Posterior cingulate gyrus (tissue), 11 donors: ENCODE measurements at regions of chr11 and their contacts with region 1.

Region 1: DNA sequence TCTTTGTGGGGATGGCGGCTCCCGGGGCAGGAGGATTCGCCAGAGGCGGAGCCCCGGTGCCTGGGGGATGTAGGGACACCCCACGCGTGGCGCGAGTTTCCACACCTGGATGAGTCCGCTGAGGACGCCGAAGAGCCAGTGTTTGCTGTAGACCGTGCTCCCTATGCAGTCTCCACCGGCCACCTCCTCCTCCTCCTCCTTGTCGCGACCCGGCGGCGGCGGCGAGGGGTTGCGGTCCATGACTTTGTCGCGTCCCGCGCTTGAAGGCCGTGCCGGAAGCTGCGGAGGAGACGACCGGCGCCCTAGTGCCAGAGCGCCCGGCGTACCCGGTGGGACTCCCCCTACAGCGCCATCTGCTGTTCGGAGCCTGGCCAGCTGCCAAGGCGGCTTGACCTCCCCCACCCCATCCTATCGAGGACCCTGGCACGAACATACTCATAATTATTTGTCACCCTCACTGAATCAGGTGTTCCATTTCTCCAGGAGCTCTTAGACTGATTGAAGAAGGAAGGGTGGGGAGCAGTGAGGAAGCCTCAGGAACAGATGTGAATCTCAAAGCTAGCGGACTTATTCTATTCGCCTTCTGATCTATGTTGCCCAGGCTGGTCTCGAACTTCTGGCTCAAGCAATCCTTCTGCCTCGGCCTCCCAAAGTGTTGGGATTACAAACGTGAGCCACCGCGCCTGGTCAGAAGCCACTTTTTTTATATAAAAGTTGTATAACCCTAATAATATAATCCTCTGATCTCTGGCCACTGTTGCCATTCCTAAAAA is at the start of gene SAAL1:
- DNase-seq: peak; percentile 77 to 98 (median 88)

Region 2: DNA sequence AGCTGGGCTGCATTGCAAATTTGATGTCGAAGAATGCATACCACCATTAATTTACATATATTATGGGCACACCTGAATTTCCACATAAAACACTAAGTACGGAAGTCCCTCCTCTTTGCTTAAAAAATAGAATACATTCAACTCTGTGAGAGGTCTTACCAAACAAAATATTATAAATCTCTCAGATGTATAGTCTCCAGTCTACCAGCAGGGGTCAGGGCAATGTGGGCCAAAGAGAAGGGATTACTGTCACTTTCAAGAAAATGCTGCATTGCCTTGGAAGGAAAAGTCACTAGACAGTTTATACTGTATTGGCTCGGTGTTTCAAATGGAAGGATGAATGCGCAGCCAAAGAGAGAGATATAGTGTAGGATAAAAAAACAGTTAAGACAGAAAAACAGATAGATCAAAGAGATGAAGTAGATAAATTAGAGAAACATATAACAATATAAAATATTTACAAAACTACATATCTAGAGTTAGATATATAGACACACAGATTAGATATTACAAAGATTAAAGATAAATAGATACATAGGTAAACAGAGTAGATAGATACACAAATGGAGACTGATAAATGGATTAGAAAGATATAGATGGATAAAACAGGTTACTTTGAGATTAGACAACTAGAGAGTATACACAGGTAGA is 114.1 kb before region 1 on chr11:
- intact Hi-C with region 1: loop called (anchors 2 kb)
- DNase-seq: peak in 5 of 10 donors; percentile 36 to 85 (median 39)

Region 3: DNA sequence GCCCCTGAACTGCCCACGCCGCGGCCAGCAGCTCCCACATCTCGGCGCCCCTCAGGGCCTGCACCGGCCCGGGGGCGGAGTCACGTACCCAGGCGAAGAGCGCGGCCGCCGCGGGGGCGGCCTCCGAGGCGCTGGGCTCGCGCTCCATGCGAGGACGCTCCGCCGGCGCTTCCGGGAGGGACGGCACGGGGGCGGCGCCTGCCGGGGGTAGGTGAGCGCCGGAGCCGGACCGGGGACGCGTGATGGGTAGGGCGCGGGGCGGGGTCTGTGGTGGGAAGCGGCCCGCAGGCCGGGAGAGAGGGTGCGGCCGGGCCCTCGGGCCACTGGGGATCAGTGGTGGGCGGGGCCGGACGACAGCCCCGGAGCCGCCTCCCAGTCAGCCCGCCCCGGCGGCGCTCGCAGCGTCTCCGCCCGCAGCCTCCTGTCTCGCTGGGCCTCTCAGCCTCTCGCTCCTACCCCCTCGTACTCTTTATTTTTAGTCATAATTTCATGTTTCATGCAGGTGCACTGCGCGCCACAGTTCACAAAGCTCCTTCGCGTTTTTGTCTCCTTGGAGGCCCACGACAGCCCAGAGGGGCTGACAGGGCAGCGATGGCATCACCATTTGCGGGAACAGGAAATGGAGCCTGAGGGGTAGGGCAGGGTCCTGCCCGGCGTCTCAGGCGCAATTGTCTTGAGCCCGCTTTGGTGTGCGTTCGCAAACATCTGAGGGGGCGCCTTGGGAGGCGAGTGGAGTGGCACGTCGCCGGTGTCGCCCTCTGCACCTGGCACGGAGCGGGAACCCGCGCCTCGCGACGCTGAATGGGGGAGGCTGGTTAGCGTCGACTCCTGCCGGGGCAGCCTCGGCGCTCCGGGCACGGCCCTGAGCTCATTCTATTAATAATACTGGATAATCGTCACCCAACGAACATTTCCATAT is 92.9 kb before region 1 on chr11 and contains the start of gene SERGEF:
- intact Hi-C with region 1: loop called (anchors 5 kb)
- DNase-seq: peak; percentile 70 to 98 (median 86)

Region 4: DNA sequence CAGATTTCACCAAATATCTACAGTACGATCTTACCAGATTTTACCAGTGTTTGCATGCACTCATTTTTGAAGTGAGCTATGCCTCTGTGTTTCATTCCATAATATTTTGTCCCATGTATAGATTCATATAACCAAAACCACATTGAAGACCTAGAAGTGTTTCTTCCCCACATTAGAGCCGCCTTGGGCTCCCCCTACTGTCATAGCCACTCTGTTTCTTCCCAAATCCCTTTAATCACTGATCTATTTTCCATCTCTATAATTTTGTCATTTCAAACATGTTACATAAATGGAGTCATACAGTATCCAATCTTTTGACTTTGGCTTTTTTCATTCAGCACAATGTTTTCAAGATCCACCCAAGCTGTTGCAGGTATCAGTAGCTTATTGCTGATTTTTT is 39.0 kb after region 1 on chr11:
- intact Hi-C with region 1: no loop called
- DNase-seq: no peak

Region 5: GRCh38 chr11:18408558-18409242 is 302.7 kb after region 1 on chr11:
- intact Hi-C with region 1: no loop called
- DNase-seq: no peak